ENCODE measurements at regions of chr3 and their contacts with region 1.

Region 1: GRCh38 chr3:175346573-175347356 is 487.6 kb downstream of the NAALADL2 start:
- DNase-seq: peak; percentile 16
- ATAC-seq: peak; percentile 90
- H3K4me3 ChIP-seq: no peak overlapping the region
- H3K27ac ChIP-seq: no peak overlapping the region
- H3K4me1 ChIP-seq: no peaks in the 10 kb centered on the region
- H3K27me3 ChIP-seq: no peaks in the 10 kb centered on the region
- CTCF ChIP-seq: no peak
- EP300 ChIP-seq: no peak
- POLR2A ChIP-seq: no peak
- RAD21 ChIP-seq: no peak

Region 2: GRCh38 chr3:175295248-175296052 is 51.3 kb before region 1 on chr3:
- CTCF ChIA-PET with region 1: interaction called, 4 read pairs
- POLR2A ChIA-PET with region 1: no interaction called
- RAD21 ChIA-PET with region 1: interaction called, 10 read pairs
- SMC1A ChIA-PET with region 1: interaction called, 6 read pairs
- in situ Hi-C with region 1: no loop called
- intact Hi-C with region 1: no loop called
- DNase-seq: no peak
- ATAC-seq: peak; percentile 27
- H3K4me3 ChIP-seq: no peak overlapping the region
- H3K27ac ChIP-seq: no peak overlapping the region
- H3K4me1 ChIP-seq: no peaks in the 10 kb centered on the region
- H3K27me3 ChIP-seq: no peaks in the 10 kb centered on the region
- CTCF ChIP-seq: no peak
- EP300 ChIP-seq: no peak
- POLR2A ChIP-seq: no peak
- RAD21 ChIP-seq: no peak

Region 3: GRCh38 chr3:175307642-175308041 is 39.1 kb before region 1 on chr3:
- CTCF ChIA-PET with region 1: no interaction called
- POLR2A ChIA-PET with region 1: interaction called, 4 read pairs
- RAD21 ChIA-PET with region 1: interaction called, 21 read pairs
- SMC1A ChIA-PET with region 1: interaction called, 23 read pairs
- in situ Hi-C with region 1: no loop called
- intact Hi-C with region 1: no loop called
- DNase-seq: no peak
- ATAC-seq: peak; percentile 88
- H3K4me3 ChIP-seq: no peak overlapping the region
- H3K27ac ChIP-seq: no peak overlapping the region
- H3K4me1 ChIP-seq: no peaks in the 10 kb centered on the region
- H3K27me3 ChIP-seq: no peaks in the 10 kb centered on the region
- CTCF ChIP-seq: no peak
- EP300 ChIP-seq: 0 out of 4 replicates have a peak, but pooled peaks of 1 of the 2 experiments have one; percentile 32
- POLR2A ChIP-seq: no peak
- RAD21 ChIP-seq: no peak

Measured in GM12878 (cell line).